Heart right ventricle (tissue), 16 donors: ENCODE measurements at regions of chr22 and their contacts with region 1.

Region 1: GRCh38 chr22:32474635-32475467 is at the start of gene FBXO7:
- DNase-seq: peak; percentile 93 to 94
- ATAC-seq: peak; percentile 92 to 95 (median 94)
- H3K4me3 ChIP-seq: peak within 1 kb of the TSS; percentile 71 to 100 (median 89)
- H3K27ac ChIP-seq: peak within 1 kb of the TSS; percentile 97 to 100 (median 99)
- H3K4me1 ChIP-seq: peaks cover 0 to 49% (median 31%) of the 10 kb centered on the region in 9 donors
- H3K27me3 ChIP-seq: no peaks in the 10 kb centered on the region
- CTCF ChIP-seq: peak in 6 of 9 donors; percentile 27 to 72 (median 51)
- total RNA-seq, gene FBXO7: 34.3 to 52.2 (median 38.9) TPM

Region 2: DNA sequence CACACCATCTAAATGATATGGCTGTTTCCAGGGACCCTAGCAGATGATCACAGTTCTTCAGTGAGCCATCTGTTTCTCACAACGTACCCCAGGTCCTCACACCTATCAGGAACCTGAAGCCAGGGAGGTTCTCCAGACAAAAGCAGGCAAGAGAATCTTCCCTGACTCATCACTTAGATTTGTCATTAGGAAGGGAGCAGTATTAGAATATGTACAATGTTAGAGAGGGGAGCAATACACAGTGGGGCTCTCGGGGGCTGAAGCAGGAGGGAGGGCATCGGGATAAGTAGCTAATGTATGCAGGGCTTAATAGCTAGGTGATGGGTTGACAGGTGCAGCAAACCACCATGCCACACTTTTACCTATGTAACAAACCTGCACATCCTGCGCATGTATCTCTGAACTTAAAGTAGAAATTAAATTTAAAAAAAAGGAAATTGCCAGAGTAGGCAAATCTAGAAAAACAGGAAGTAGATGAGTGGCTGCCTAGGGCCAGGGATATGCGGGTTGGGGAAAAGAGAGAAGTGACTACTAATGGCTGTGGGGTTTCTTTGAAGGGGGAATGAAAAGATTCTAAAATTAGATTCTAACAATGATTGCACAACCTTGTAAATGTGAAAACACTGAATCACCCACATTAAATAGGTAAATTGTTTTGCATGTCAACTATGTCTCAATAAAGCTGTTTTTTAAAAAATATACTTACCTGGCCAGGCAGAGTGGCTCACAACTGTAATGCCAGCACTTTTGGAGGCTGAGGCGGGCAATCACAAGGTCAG is 330.2 kb before region 1 on chr22:
- intact Hi-C with region 1: loop called in 1 of 10 experiments (anchors 10 kb)
- DNase-seq: no peak
- ATAC-seq: peak in 3 of 8 donors; percentile 35 to 53 (median 42)
- H3K4me3 ChIP-seq: no peak overlapping the region
- H3K27ac ChIP-seq: no peak overlapping the region
- H3K4me1 ChIP-seq: peaks cover 0 to 19% (median 0%) of the 10 kb centered on the region in 9 donors
- H3K27me3 ChIP-seq: no peaks in the 10 kb centered on the region
- CTCF ChIP-seq: no peak

Region 3: GRCh38 chr22:32218470-32218869 is 256.4 kb before region 1 on chr22:
- intact Hi-C with region 1: no loop called
- DNase-seq: no peak
- ATAC-seq: no peak
- H3K4me3 ChIP-seq: no peak overlapping the region
- H3K27ac ChIP-seq: peak overlapping the region in 1 of 10 donors; percentile 28
- H3K4me1 ChIP-seq: peaks cover 0 to 8% (median 0%) of the 10 kb centered on the region in 9 donors
- H3K27me3 ChIP-seq: peaks cover 0 to 9% (median 0%) of the 10 kb centered on the region in 7 donors
- CTCF ChIP-seq: no peak

Region 4: DNA sequence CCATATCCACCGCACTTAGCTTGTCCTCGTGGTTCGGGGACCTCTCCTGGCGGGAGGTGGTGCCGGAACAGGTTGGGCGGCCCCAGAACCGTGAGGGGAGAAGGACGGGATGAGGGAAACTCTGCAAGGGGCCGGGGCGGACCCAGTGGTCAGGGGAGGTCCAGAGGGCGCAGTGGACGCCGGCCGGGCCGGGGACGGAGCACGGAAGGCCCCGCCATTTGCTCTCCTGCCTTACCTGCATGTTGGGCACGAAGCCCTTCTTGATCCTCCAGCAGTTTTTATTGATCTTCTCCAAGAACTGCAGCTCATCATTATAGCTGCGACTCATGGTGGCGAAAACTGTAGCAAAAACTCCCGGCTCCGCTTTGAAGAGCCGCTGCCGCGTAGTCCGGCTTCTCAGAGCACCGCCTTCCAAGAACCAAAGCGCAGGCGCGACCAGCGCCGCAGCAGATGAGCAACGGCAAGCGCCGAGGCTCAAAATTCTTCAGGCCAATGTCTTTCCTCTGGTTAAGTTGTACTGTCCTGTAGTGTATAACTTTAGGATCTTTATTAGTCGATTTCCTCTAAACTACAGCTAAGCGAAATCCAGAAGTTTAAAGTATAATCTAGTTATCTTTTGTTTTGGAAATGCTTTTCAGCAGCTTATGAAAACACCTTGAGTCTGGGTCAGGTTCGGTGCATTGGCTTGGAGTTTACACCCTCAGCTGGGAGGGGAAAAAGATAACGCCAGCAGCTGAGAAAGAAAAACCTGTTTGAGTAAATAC is 62.8 kb before region 1 on chr22 and contains the start of gene RTCB:
- intact Hi-C with region 1: loop called in 6 of 10 experiments (anchors 2 to 10 kb)
- DNase-seq: peak; percentile 95 to 96
- ATAC-seq: peak; percentile 90 to 96 (median 95)
- H3K4me3 ChIP-seq: peak within 1 kb of the TSS; percentile 68 to 96 (median 86)
- H3K27ac ChIP-seq: peak within 1 kb of the TSS in 9 of 10 donors; percentile 23 to 85 (median 73)
- H3K4me1 ChIP-seq: peaks cover 0 to 42% (median 22%) of the 10 kb centered on the region in 9 donors
- H3K27me3 ChIP-seq: peaks cover 0 to 5% (median 0%) of the 10 kb centered on the region in 7 donors
- CTCF ChIP-seq: no peak
- total RNA-seq, gene RTCB: 41.1 to 51.1 (median 47.0) TPM

Region 5: GRCh38 chr22:32862936-32863661 is 388.2 kb after region 1 on chr22:
- intact Hi-C with region 1: no loop called
- DNase-seq: no peak
- ATAC-seq: peak in 5 of 8 donors; percentile 17 to 56 (median 26)
- H3K4me3 ChIP-seq: no peak overlapping the region
- H3K27ac ChIP-seq: peak overlapping the region in 2 of 10 donors; percentile 2 to 48
- H3K4me1 ChIP-seq: peaks cover 0 to 13% (median 0%) of the 10 kb centered on the region in 9 donors
- H3K27me3 ChIP-seq: no peaks in the 10 kb centered on the region
- CTCF ChIP-seq: no peak